ENCODE measurements at regions of chr9 and their contacts with region 1.

Region 1: DNA sequence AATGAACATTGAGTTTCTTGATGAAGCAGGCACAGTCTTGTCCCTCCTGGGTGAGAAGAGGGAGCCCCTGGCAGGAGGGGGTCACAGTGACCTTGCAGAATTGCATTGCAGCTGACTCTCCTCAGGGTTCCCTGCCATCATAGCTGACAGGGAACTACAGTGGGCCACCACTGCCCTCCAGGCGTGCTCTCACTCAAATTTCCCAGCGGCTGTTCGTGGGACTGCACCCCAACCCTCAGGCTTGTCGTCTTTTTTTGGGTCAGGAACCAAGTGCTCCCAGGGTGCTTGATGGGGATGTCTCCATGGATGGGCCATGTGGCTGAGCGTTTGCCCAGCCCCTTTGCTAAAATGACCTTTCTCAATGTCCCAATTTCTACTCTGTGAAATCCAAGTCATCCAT is 215.8 kb downstream of the MELK start:
- DNase-seq: peak in 1 of 2 experiments; percentile 78
- H3K4me3 ChIP-seq: no peak overlapping the region
- H3K27ac ChIP-seq: no peak overlapping the region
- H3K4me1 ChIP-seq: no peaks in the 10 kb centered on the region
- H3K27me3 ChIP-seq: no peaks in the 10 kb centered on the region; a peak in 1 of 7 replicates
- CTCF ChIP-seq: peak; percentile 53 to 67 (median 55)
- EP300 ChIP-seq: no peak
- POLR2A ChIP-seq: no peak
- RAD21 ChIP-seq: peak; percentile 28 to 47; a peak in 3 of 4 replicates

Region 2: GRCh38 chr9:36721846-36722572 is 66.5 kb before region 1 on chr9:
- CTCF ChIA-PET with region 1: no interaction called
- POLR2A ChIA-PET with region 1: no interaction called
- DNase-seq: no peak
- H3K4me3 ChIP-seq: no peak overlapping the region
- H3K27ac ChIP-seq: no peak overlapping the region
- H3K4me1 ChIP-seq: peaks cover 2 to 9% (median 4%) of the 10 kb centered on the region in 4 experiments; a peak in 6 of 7 replicates
- H3K27me3 ChIP-seq: no peaks in the 10 kb centered on the region
- CTCF ChIP-seq: no peak
- EP300 ChIP-seq: no peak
- POLR2A ChIP-seq: no peak
- RAD21 ChIP-seq: no peak

Region 3: DNA sequence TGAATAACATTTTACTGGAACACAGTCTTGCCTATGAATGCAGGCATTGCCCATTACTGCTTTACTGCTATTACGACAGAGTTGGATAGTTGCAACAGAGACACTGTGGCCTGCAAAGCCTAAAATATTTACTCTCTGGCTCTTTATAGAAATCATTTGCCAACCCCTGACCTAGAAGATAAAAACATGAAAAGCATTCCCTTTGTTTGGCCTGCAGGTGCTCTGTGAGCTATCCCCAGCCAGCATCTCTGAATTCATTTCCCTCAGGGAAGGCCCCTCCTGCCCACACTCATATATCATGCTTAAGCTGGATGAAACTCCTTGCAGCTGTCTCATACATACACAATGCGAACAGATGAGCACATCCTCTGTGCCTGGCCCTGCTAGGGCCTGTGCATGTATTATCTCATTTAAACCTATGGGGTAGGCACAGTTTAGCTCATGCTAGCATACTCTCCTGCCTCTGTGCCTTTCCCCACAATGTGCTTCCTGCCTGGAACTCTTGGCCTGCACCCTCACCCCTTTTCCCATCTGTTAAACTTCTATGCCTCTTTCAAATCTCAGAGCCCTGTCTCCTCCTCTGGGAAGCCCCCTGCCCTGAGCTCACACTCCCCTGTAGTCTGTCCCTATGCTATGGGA is 52.5 kb after region 1 on chr9:
- CTCF ChIA-PET with region 1: interaction called, 11 read pairs
- POLR2A ChIA-PET with region 1: no interaction called
- DNase-seq: no peak
- H3K4me3 ChIP-seq: no peak overlapping the region
- H3K27ac ChIP-seq: no peak overlapping the region
- H3K4me1 ChIP-seq: peaks cover 2 to 21% (median 12%) of the 10 kb centered on the region in 4 experiments
- H3K27me3 ChIP-seq: no peaks in the 10 kb centered on the region; a peak in 1 of 7 replicates
- CTCF ChIP-seq: no peak
- EP300 ChIP-seq: no peak
- POLR2A ChIP-seq: no peak
- RAD21 ChIP-seq: no peak

Region 4: GRCh38 chr9:36862206-36863145 is 73.9 kb after region 1 on chr9:
- CTCF ChIA-PET with region 1: interaction called, 148 read pairs
- POLR2A ChIA-PET with region 1: no interaction called
- DNase-seq: peak in 1 of 2 experiments; percentile 75
- H3K4me3 ChIP-seq: no peak overlapping the region
- H3K27ac ChIP-seq: no peak overlapping the region
- H3K4me1 ChIP-seq: peaks cover 0 to 17% (median 7%) of the 10 kb centered on the region in 4 experiments; a peak in 6 of 7 replicates
- H3K27me3 ChIP-seq: peaks cover 0 to 28% (median 21%) of the 10 kb centered on the region in 4 experiments; a peak in 5 of 7 replicates
- CTCF ChIP-seq: peak; percentile 78 to 90 (median 82)
- EP300 ChIP-seq: no peak
- POLR2A ChIP-seq: no peak
- RAD21 ChIP-seq: peak; percentile 49 to 66

Region 5: DNA sequence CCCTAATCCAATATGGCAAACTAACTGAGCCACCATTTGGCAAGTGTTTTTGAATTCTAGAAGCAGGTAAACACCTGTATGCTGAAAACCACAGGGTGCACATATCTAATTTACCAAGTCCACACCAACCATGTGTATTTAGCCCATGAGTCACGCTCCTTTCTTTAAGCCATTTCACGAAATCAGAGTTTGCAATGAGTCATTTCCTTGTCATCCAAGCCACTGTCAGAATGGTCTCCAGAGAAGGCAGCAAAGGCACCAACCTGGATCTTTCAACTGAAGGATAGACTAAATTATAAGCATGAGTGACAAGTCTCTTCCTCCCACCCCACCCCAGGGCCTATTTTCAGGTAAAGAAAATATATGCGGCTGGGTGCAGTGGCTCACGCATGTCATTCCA is 135.5 kb after region 1 on chr9:
- CTCF ChIA-PET with region 1: no interaction called
- POLR2A ChIA-PET with region 1: no interaction called
- DNase-seq: no peak
- H3K4me3 ChIP-seq: no peak overlapping the region
- H3K27ac ChIP-seq: no peak overlapping the region
- H3K4me1 ChIP-seq: no peaks in the 10 kb centered on the region
- H3K27me3 ChIP-seq: no peaks in the 10 kb centered on the region; a peak in 1 of 7 replicates
- CTCF ChIP-seq: no peak
- EP300 ChIP-seq: no peak
- POLR2A ChIP-seq: no peak
- RAD21 ChIP-seq: no peak

Measured in H1 (cell line).